Activated CD4-positive, alpha-beta T cell treated with anti-CD3 and anti-CD28 coated beads, Interleukin-2, amount 10 ng/mL, durations not matched to agents 24 days and 14 days (primary cell): ENCODE measurements at regions of chr4 and their contacts with region 1.

Region 1: GRCh38 chr4:168421671-168422070 is 58.6 kb downstream of the DDX60L start:
- DNase-seq: peak; percentile 72
- H3K4me3 Mint-ChIP-seq: peak overlapping the region; percentile 44
- H3K27ac Mint-ChIP-seq: peak overlapping the region; percentile 75
- H3K4me1 Mint-ChIP-seq: peaks cover 11% of the 10 kb centered on the region
- H3K27me3 Mint-ChIP-seq: no peaks in the 10 kb centered on the region

Region 2: DNA sequence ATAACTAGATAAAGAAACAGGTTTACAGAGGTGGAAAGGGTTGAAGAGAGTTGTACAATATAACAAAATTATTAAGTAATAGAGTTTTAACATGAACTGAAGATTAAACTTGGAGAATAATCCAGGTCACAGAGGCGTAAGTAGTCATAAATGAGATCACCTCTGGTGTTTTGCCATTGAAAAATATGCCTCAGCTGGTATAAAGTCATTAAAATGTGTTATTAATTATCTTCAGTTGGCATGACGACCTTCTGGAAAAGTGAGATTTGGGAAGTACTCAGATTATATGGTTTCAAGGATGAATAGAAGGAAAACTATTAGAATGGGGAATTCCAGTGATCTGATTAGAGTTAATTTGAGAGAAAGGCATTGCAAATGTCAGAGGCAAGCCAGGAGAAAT is 566.8 kb before region 1 on chr4:
- intact Hi-C with region 1: no loop called
- DNase-seq: no peak
- H3K4me3 Mint-ChIP-seq: no peak overlapping the region
- H3K27ac Mint-ChIP-seq: no peak overlapping the region
- H3K4me1 Mint-ChIP-seq: no peaks in the 10 kb centered on the region
- H3K27me3 Mint-ChIP-seq: no peaks in the 10 kb centered on the region

Region 3: GRCh38 chr4:168480931-168481611 is 59.4 kb after region 1 on chr4:
- intact Hi-C with region 1: loop called (anchors 5 kb)
- DNase-seq: peak; percentile 85
- H3K4me3 Mint-ChIP-seq: peak overlapping the region; percentile 98
- H3K27ac Mint-ChIP-seq: peak overlapping the region; percentile 99
- H3K4me1 Mint-ChIP-seq: peaks cover 60% of the 10 kb centered on the region
- H3K27me3 Mint-ChIP-seq: no peaks in the 10 kb centered on the region